Panc1 (cell line): ENCODE measurements at regions of chr6 and their contacts with region 1.

Region 1: GRCh38 chr6:83067448-83068413 is at the start of gene DOP1A:
- DNase-seq: peak; percentile 78
- ATAC-seq: peak; percentile 97
- H3K4me3 ChIP-seq: peak within 1 kb of the TSS; percentile 78 to 86
- H3K27ac ChIP-seq: peak within 1 kb of the TSS; percentile 83
- H3K4me1 ChIP-seq: peaks cover 31% of the 10 kb centered on the region
- H3K27me3 ChIP-seq: no peaks in the 10 kb centered on the region
- CTCF ChIP-seq: peak; percentile 96
- total RNA-seq, gene DOP1A: 13.4 TPM

Region 2: DNA sequence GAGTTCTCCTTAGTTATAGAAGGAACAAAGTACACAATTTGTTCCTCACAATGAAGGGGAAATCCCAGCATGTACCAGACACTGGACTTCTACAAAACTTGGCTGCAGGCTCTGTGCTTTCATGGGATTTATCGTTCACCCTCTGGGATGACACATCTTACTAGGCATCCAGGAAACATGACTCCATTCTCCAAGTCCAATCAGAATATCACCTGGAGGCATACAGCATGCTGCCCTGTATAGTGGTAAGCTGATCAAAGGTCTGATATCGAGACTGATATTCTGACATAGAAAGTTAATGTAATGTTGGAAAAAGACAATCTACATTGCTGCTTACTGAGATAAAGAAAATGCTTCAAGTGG is 132.1 kb after region 1 on chr6:
- CTCF ChIA-PET with region 1: interaction called, 4 read pairs
- POLR2A ChIA-PET with region 1: no interaction called
- in situ Hi-C with region 1: no loop called
- intact Hi-C with region 1: loop called (anchors 5 kb)
- DNase-seq: no peak
- ATAC-seq: peak; percentile 74
- H3K4me3 ChIP-seq: no peak overlapping the region
- H3K27ac ChIP-seq: no peak overlapping the region
- H3K4me1 ChIP-seq: peaks cover 4% of the 10 kb centered on the region; the same call in 1 of the 2 replicates
- H3K27me3 ChIP-seq: no peaks in the 10 kb centered on the region
- CTCF ChIP-seq: no peak

Region 3: DNA sequence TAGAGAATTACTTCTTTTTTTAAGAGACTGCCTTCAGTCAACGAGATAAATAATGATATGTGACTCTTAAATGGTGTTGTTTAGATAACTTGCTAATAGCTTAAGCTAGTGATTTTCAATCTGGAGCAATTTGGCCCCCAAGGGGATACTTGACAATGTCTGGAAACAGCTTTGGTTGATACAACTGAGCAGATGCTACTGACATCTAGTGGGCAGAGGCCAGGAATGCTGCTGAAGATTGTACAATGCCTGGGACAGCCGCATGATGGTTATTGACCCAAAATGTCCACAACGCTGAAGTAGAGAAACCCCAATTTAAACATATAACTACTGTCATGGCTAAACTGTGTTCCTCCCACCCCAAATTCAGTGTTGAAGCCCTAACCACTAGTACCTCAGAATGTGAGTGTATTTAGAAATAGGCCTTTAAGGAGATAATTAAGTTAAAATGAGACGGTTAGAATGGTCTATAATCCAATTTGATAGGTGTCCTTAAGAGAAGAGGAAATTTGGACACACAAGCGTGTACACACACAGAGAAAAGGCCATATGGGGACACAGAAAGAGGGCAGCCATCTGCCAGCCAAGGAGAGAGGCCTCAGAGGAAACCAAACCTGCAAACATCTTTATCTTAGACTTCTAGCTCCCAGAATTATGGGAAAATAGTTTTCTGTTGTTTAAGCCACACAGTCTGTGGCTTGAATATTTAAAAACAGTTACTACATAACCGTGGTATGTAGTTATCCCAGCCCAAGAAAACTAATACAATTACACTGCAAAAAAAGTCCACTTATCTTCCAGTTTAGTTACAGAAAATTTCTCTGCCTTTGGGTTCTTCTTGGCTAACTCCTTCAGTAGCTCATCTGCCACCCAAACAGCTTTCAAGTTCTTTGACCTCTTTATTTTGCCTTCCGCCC is 147.7 kb after region 1 on chr6:
- CTCF ChIA-PET with region 1: interaction called, 11 read pairs
- POLR2A ChIA-PET with region 1: interaction called, 7 read pairs
- in situ Hi-C with region 1: no loop called
- intact Hi-C with region 1: loop called (anchors 1 kb)
- DNase-seq: no peak
- ATAC-seq: peak; percentile 93
- H3K4me3 ChIP-seq: no peak overlapping the region
- H3K27ac ChIP-seq: no peak overlapping the region
- H3K4me1 ChIP-seq: no peaks in the 10 kb centered on the region
- H3K27me3 ChIP-seq: no peaks in the 10 kb centered on the region
- CTCF ChIP-seq: peak; percentile 90

Region 4: DNA sequence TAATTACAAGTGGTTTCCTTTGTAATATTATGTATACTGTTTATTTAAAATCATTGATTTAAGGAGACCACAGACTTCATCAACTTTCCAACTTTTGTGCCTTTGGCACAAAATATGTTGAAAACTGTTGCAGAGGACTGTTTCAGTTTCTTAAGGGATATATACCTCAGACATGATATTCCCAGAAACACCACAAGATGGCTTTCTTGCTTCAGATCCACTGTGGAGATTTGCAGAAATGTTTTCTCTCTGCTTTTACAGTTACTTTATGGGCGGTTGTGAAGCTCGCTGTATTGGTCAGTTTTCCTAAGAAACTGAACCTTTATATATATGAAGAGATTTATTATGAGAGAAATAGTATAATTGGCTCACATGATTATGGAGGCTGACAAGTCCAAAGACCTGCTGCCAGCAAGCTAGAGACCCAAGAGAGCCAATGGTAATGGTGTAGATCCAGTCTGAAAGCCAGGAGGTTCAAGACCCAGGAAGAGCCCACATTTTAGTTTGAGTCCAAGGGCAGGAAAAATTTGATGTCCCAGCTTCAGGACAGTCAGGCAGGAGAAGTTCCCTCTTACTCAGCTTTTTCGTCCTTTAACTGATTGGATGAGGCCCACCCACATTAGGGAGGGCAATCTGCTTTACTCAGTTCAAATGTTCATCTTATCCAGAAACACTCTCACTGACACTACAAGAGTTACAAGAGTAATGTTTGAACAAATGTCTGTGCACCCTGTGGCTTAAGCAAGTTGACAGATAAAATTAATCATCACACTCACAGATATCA is 350.3 kb after region 1 on chr6:
- CTCF ChIA-PET with region 1: no interaction called
- POLR2A ChIA-PET with region 1: no interaction called
- in situ Hi-C with region 1: no loop called
- intact Hi-C with region 1: loop called (anchors 10 kb)
- DNase-seq: peak; percentile 32
- ATAC-seq: peak; percentile 92
- H3K4me3 ChIP-seq: no peak overlapping the region
- H3K27ac ChIP-seq: no peak overlapping the region
- H3K4me1 ChIP-seq: no peaks in the 10 kb centered on the region
- H3K27me3 ChIP-seq: no peaks in the 10 kb centered on the region
- CTCF ChIP-seq: peak; percentile 71; the same call in 1 of the 2 replicates

Region 5: GRCh38 chr6:83804886-83805285 is 737.2 kb after region 1 on chr6:
- CTCF ChIA-PET with region 1: no interaction called
- POLR2A ChIA-PET with region 1: no interaction called
- in situ Hi-C with region 1: no loop called
- intact Hi-C with region 1: no loop called
- DNase-seq: no peak
- ATAC-seq: no peak
- H3K4me3 ChIP-seq: no peak overlapping the region
- H3K27ac ChIP-seq: no peak overlapping the region
- H3K4me1 ChIP-seq: no peaks in the 10 kb centered on the region
- H3K27me3 ChIP-seq: no peaks in the 10 kb centered on the region
- CTCF ChIP-seq: no peak

Region 6: DNA sequence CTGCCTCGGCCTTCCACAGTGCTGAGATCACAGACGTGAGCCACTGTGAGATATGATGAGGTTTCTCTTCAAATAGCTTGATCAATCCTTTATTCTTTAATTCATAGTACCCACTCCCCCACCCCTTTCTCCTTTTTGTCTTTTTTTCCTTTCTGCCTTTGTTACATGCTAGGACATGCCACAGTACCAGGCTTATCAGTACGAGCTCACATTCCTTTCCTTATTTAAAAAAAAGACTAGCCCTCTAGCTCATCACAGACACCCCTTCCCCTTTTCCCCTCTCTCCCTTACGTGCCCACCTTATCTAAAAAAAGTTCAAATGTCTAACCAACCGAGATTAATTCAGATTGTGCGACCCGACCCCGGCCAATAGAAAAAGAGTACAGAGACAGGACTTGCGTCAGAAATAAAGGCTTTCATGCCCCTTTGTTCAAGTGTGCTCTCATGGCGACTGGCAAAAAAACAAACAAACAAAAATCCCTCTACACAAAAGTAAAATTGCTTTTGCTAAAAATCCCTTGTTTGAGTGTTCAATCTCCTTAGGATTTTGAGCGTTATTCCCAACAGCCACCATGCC is 1015.0 kb after region 1 on chr6:
- CTCF ChIA-PET with region 1: no interaction called
- POLR2A ChIA-PET with region 1: no interaction called
- in situ Hi-C with region 1: no loop called
- intact Hi-C with region 1: no loop called
- DNase-seq: no peak
- ATAC-seq: no peak
- H3K4me3 ChIP-seq: no peak overlapping the region
- H3K27ac ChIP-seq: no peak overlapping the region
- H3K4me1 ChIP-seq: no peaks in the 10 kb centered on the region
- H3K27me3 ChIP-seq: peaks cover 2% of the 10 kb centered on the region; the same call in 1 of the 2 replicates
- CTCF ChIP-seq: no peak